Left colon (tissue), 2 donors: ENCODE measurements at regions of chr11 and their contacts with region 1.

Region 1: GRCh38 chr11:130069684-130070108 is at the start of gene APLP2:
- DNase-seq: peak; percentile 99 to 100
- ATAC-seq: peak; percentile 82
- total RNA-seq, gene APLP2: 349 to 496 TPM

Region 2: DNA sequence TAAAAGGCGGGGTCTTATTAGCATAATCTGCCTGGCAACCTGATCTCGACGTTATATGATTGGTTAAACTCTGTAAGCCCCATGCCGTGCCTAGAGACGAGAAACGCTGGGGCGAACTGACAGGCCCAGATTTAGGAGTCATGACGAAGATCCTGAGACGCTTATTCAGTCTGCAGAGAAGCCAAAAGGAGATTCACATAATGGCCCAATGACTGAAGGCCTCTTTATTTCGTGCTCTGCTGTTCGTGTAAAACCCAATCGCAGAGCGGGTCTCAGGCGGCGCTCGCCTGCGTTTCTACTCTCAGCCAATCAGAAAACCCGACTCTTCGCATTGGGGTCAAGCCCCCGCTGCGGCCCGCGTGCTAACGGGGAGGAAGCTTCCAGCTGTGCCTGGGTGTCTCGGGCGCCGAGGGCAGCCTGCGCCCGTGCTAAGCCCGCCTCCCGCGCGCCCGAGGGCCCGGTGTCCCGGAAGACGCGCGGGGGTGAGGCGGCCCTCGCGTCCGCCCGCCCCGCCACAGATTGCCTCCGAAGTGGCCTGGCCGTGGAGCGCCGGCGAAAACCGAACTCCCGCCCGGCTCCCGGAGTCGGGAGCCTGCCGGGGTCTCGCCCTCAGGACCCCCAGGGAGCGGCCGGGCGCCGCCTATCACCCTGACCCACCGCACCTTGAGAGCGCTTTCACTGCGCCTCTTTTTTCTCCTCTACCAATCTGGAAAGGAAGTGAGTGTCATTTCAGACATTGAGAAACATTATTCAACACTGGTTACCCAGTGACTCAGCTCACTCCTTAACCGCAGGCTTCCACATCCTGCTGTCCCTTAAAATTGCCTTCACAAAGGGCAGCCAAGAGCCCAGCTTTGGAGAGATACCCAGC is 66.6 kb before region 1 on chr11:
- intact Hi-C with region 1: loop called in 1 of 2 experiments (anchors 10 kb)
- DNase-seq: peak; percentile 92 to 95
- ATAC-seq: peak; percentile 77

Region 3: GRCh38 chr11:130124096-130124495 is 54.4 kb after region 1 on chr11:
- intact Hi-C with region 1: loop called in 1 of 2 experiments (anchors 10 kb)
- DNase-seq: peak in 1 of 2 donors; percentile 51
- ATAC-seq: no peak